CD4-positive, alpha-beta memory T cell (primary cell): ENCODE measurements at regions of chr14 and their contacts with region 1.

Region 1: GRCh38 chr14:71320107-71320733 is 413.0 kb downstream of the PCNX1 start:
- DNase-seq: peak; percentile 98 to 99 (median 99)
- H3K4me3 ChIP-seq: peak within 1 kb of the TSS; percentile 55 to 77
- H3K4me3 Mint-ChIP-seq: peak within 1 kb of the TSS; percentile 91 to 97 (median 93)
- H3K27ac ChIP-seq: peak within 1 kb of the TSS; percentile 92
- H3K27ac Mint-ChIP-seq: peak within 1 kb of the TSS; percentile 90 to 99 (median 97)
- H3K4me1 ChIP-seq: peaks cover 43% of the 10 kb centered on the region
- H3K4me1 Mint-ChIP-seq: peaks cover 37 to 47% (median 41%) of the 10 kb centered on the region in 4 donors
- H3K27me3 ChIP-seq: no peaks in the 10 kb centered on the region
- H3K27me3 Mint-ChIP-seq: no peaks in the 10 kb centered on the region

Region 2: GRCh38 chr14:69766984-69767368 is 1553.2 kb before region 1 on chr14 and contains the start of gene SRSF5:
- CTCF ChIA-PET with region 1: no interaction called
- POLR2A ChIA-PET with region 1: interaction called, 5 read pairs
- intact Hi-C with region 1: loop called (anchors 2 kb)
- DNase-seq: peak; percentile 92 to 95 (median 94)
- H3K4me3 ChIP-seq: peak within 1 kb of the TSS; percentile 83 to 95
- H3K4me3 Mint-ChIP-seq: peak within 1 kb of the TSS; percentile 98 to 100 (median 100)
- H3K27ac ChIP-seq: peak within 1 kb of the TSS; percentile 100
- H3K27ac Mint-ChIP-seq: peak within 1 kb of the TSS; percentile 100
- H3K4me1 ChIP-seq: peaks cover 48% of the 10 kb centered on the region
- H3K4me1 Mint-ChIP-seq: peaks cover 41 to 79% (median 57%) of the 10 kb centered on the region in 4 donors
- H3K27me3 ChIP-seq: no peaks in the 10 kb centered on the region
- H3K27me3 Mint-ChIP-seq: no peaks in the 10 kb centered on the region
- total RNA-seq, gene SRSF5: 946 to 964 TPM

Region 3: GRCh38 chr14:71138448-71139293 is 181.5 kb before region 1 on chr14:
- CTCF ChIA-PET with region 1: interaction called, 12 read pairs
- POLR2A ChIA-PET with region 1: interaction called, 22 read pairs
- intact Hi-C with region 1: loop called (anchors 2 kb)
- DNase-seq: peak; percentile 40 to 58 (median 48)
- H3K4me3 ChIP-seq: no peak overlapping the region
- H3K4me3 Mint-ChIP-seq: no peak overlapping the region
- H3K27ac ChIP-seq: no peak overlapping the region
- H3K27ac Mint-ChIP-seq: peak overlapping the region in 1 of 7 donors; percentile 10
- H3K4me1 ChIP-seq: peaks cover 25% of the 10 kb centered on the region
- H3K4me1 Mint-ChIP-seq: peaks cover 14 to 23% (median 22%) of the 10 kb centered on the region in 4 donors
- H3K27me3 ChIP-seq: no peaks in the 10 kb centered on the region
- H3K27me3 Mint-ChIP-seq: peaks cover 0 to 3% of the 10 kb centered on the region in 2 donors

Region 4: DNA sequence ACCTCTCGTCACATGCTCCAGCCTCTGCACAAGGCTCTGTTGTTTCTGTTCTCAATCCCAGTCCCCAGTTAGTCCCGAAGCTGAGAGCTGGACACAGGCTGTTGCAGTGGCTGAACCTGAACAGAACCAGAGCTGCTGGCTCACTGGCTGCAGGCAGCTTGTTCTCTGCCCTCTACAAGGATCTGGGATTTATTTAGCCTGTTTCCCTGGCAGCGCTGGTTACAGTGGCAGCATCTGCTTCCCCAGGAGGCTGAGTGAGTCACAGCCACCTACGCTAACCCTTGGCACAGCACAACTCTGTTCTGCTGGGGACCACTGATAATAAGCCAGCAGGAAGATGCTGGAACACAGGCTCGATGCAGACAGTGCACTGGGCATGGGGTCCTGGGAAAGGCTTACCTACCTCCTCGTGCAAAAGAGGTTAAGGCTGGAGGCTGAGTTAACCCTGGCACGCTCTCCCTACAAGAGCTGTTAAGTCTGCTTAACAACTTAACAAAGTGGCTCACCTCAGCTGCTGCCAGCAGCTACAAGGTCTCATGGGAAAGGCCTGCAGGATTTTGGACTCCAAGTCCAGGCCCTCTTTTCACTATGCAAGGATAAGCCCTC is 113.4 kb before region 1 on chr14:
- CTCF ChIA-PET with region 1: no interaction called
- POLR2A ChIA-PET with region 1: no interaction called
- intact Hi-C with region 1: no loop called
- DNase-seq: no peak
- H3K4me3 ChIP-seq: no peak overlapping the region
- H3K4me3 Mint-ChIP-seq: no peak overlapping the region
- H3K27ac ChIP-seq: no peak overlapping the region
- H3K27ac Mint-ChIP-seq: no peak overlapping the region
- H3K4me1 ChIP-seq: no peaks in the 10 kb centered on the region
- H3K4me1 Mint-ChIP-seq: no peaks in the 10 kb centered on the region
- H3K27me3 ChIP-seq: no peaks in the 10 kb centered on the region
- H3K27me3 Mint-ChIP-seq: peaks cover 0 to 5% of the 10 kb centered on the region in 2 donors

Region 5: GRCh38 chr14:71403656-71404055 is 83.4 kb after region 1 on chr14:
- CTCF ChIA-PET with region 1: interaction called, 17 read pairs
- POLR2A ChIA-PET with region 1: interaction called, 8 read pairs
- intact Hi-C with region 1: loop called (anchors 2 kb)
- DNase-seq: peak in 3 of 5 donors; percentile 33 to 47 (median 36)
- H3K4me3 ChIP-seq: no peak overlapping the region
- H3K4me3 Mint-ChIP-seq: no peak overlapping the region
- H3K27ac ChIP-seq: no peak overlapping the region
- H3K27ac Mint-ChIP-seq: peak overlapping the region in 3 of 7 donors; percentile 43 to 59 (median 49)
- H3K4me1 ChIP-seq: peaks cover 16% of the 10 kb centered on the region
- H3K4me1 Mint-ChIP-seq: peaks cover 22 to 34% (median 24%) of the 10 kb centered on the region in 4 donors
- H3K27me3 ChIP-seq: no peaks in the 10 kb centered on the region
- H3K27me3 Mint-ChIP-seq: no peaks in the 10 kb centered on the region

Region 6: GRCh38 chr14:71753126-71753830 is 433.1 kb after region 1 on chr14:
- CTCF ChIA-PET with region 1: interaction called, 9 read pairs
- POLR2A ChIA-PET with region 1: interaction called, 3 read pairs
- intact Hi-C with region 1: loop called (anchors 1 kb)
- DNase-seq: peak; percentile 53 to 62 (median 58)
- H3K4me3 ChIP-seq: no peak overlapping the region
- H3K4me3 Mint-ChIP-seq: no peak overlapping the region
- H3K27ac ChIP-seq: no peak overlapping the region
- H3K27ac Mint-ChIP-seq: no peak overlapping the region
- H3K4me1 ChIP-seq: peaks cover 6% of the 10 kb centered on the region
- H3K4me1 Mint-ChIP-seq: no peaks in the 10 kb centered on the region
- H3K27me3 ChIP-seq: no peaks in the 10 kb centered on the region
- H3K27me3 Mint-ChIP-seq: peaks cover 0 to 2% of the 10 kb centered on the region in 2 donors